Lower leg skin (tissue), 4 donors: ENCODE measurements at regions of chr6 and their contacts with region 1.

Region 1: GRCh38 chr6:115969207-115969929 is 91.3 kb downstream of the FRK start:
- DNase-seq: no peak
- H3K4me3 ChIP-seq: no peak overlapping the region
- CTCF ChIP-seq: no peak
- POLR2A ChIP-seq: no peak

Region 2: GRCh38 chr6:115817161-115817560 is 152.2 kb before region 1 on chr6:
- intact Hi-C with region 1: no loop called
- DNase-seq: no peak
- H3K4me3 ChIP-seq: no peak overlapping the region
- CTCF ChIP-seq: no peak
- POLR2A ChIP-seq: no peak

Region 3: DNA sequence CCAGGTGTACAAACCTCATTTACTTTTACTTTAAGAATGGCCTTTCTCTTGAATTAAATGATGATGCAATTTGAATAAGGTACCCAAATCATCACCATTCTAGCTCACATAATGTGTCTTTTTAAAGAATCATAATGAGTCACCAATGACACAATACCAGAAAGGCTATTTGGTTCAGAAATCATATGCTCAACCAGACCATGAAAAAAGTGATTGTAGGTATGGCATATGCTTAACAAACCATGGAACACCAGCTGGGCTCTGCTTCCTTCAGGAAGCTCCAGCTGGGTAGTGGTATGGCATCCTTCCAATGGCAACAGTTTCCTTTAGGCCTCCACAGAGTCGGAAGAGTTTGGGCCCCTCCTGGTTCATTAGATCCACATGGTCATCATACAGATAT is 36.9 kb before region 1 on chr6:
- intact Hi-C with region 1: loop called (anchors 2 kb)
- DNase-seq: no peak
- H3K4me3 ChIP-seq: no peak overlapping the region
- CTCF ChIP-seq: no peak
- POLR2A ChIP-seq: no peak